Tibial artery (tissue), 4 donors: ENCODE measurements at regions of chr15 and their contacts with region 1.

Region 1: GRCh38 chr15:82749951-82750830 is 40.5 kb upstream of the AP3B2 start:
- DNase-seq: peak; percentile 93 to 94
- H3K4me3 ChIP-seq: peak overlapping the region; percentile 74 to 76
- H3K27ac ChIP-seq: peak overlapping the region; percentile 81 to 89
- H3K4me1 ChIP-seq: peaks cover 0 to 22% (median 17%) of the 10 kb centered on the region in 4 donors
- H3K27me3 ChIP-seq: no peaks in the 10 kb centered on the region
- CTCF ChIP-seq: no peak

Region 2: DNA sequence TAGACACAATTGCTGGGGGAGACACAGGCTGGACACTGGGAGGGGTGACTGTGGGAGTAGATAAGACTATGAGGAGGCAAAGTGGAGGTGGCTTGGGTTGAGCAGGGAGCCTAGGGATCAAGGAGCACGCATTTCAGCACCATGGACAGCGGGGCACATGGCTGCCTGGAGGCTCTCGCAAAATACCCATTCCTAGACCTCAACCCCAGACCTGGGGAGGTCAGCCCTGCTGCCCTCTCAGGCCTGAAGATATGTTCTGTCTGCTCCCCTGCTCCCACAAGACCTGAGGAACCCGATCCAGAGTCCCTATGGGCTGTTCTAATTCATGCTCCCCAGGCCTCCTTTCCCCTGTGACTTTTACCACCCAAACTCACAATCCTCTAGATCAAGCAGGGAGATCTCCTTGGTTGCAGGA is 87.0 kb before region 1 on chr15:
- intact Hi-C with region 1: no loop called
- DNase-seq: no peak
- H3K4me3 ChIP-seq: no peak overlapping the region
- H3K27ac ChIP-seq: no peak overlapping the region
- H3K4me1 ChIP-seq: no peaks in the 10 kb centered on the region
- H3K27me3 ChIP-seq: peaks cover 0 to 9% of the 10 kb centered on the region in 2 donors
- CTCF ChIP-seq: no peak

Region 3: GRCh38 chr15:82809404-82810060 is 59.3 kb after region 1 on chr15 and contains the start of gene WHAMM:
- intact Hi-C with region 1: loop called (anchors 5 kb)
- DNase-seq: peak; percentile 99 to 100
- H3K4me3 ChIP-seq: peak within 1 kb of the TSS; percentile 92 to 98
- H3K27ac ChIP-seq: peak within 1 kb of the TSS; percentile 96 to 99
- H3K4me1 ChIP-seq: peaks cover 0 to 31% (median 13%) of the 10 kb centered on the region in 4 donors
- H3K27me3 ChIP-seq: no peaks in the 10 kb centered on the region
- CTCF ChIP-seq: no peak